ENCODE measurements at regions of chr14 and their contacts with region 1.

Region 1: DNA sequence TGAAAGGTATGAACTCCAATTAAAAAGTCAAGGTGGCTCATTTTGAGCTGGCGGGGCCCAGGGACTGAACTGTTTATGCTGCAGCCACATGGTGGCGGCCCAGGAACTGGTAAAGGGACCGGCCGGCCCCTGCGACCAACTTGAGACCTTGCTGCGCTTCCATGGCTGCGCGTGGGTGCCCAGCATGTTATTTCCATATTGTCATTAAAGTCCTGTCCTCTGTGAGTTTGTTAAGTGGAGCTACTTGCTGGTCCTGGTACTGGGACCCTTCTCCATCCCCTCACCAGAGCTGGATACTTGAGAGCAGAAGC is 62.3 kb downstream of the BEGAIN start:
- DNase-seq: peak; percentile 61
- H3K4me3 ChIP-seq: no peak overlapping the region
- H3K27ac ChIP-seq: no peak overlapping the region
- H3K4me1 ChIP-seq: no peaks in the 10 kb centered on the region
- H3K27me3 ChIP-seq: no peaks in the 10 kb centered on the region
- CTCF ChIP-seq: peak in 1 of 4 experiments; percentile 11
- EP300 ChIP-seq: no peak
- POLR2A ChIP-seq: no peak

Region 2: DNA sequence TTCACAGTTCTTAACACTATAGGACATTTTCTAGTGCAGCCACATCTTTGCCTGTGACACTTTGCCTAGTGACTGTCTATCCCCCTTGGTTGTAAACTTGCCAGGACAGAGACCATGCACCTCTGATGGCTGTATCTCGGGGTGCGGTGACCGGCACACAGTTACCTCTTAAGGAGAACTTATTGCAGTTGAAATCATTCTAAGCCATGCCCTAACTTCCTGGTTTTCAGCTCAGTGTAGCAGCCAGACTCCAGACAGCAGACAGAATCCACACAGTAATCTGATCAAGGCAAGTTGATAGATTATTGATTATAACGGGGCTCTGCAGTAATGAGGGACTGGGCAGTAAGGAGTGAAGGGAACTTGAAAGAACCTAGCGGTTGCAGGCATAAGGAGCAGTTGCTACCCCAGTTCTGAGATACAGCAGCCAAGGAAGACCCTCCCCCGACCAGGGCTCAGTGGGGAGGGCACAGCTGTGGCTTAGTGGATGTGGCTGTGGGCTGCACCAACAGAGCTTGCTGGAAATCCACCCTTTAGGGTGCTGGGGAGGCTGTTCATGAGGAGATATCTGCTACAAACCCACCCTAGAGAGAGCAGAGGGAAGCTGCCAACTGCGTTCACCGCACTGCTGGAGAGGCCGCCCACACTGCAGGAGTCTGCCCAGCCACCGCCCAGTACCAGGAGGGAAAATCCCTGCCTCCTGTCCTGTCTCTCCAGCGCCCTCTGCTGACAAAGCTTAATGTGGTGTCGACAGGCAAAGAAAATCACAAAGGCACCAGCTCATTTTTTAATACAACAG is 120.5 kb after region 1 on chr14:
- intact Hi-C with region 1: loop called (anchors 10 kb)
- DNase-seq: peak; percentile 81
- H3K4me3 ChIP-seq: no peak overlapping the region
- H3K27ac ChIP-seq: no peak overlapping the region
- H3K4me1 ChIP-seq: no peaks in the 10 kb centered on the region
- H3K27me3 ChIP-seq: peaks cover 0 to 7% (median 0%) of the 10 kb centered on the region in 3 donors
- CTCF ChIP-seq: peak in 3 of 4 experiments; percentile 25 to 75 (median 46)
- EP300 ChIP-seq: no peak
- POLR2A ChIP-seq: no peak